ENCODE measurements at regions of chr6 and their contacts with region 1.

Region 1: GRCh38 chr6:125906158-125906998 is 50.2 kb upstream of the HINT3 start:
- DNase-seq: no peak
- ATAC-seq: peak; percentile 55
- H3K4me3 ChIP-seq: no peak overlapping the region
- H3K27ac ChIP-seq: no peak overlapping the region
- H3K4me1 ChIP-seq: peaks cover 16% of the 10 kb centered on the region
- H3K27me3 ChIP-seq: no peaks in the 10 kb centered on the region
- CTCF ChIP-seq: peak; percentile 63 to 94 (median 91)
- EP300 ChIP-seq: no peak
- POLR2A ChIP-seq: no peak
- RAD21 ChIP-seq: peak; percentile 58

Region 2: GRCh38 chr6:125888989-125889656 is 17.3 kb before region 1 on chr6:
- CTCF ChIA-PET with region 1: interaction called, 30 read pairs
- POLR2A ChIA-PET with region 1: interaction called, 4 read pairs
- RAD21 ChIA-PET with region 1: no interaction called
- SMC1A ChIA-PET with region 1: interaction called, 4 read pairs
- in situ Hi-C with region 1: no loop called
- intact Hi-C with region 1: no loop called
- DNase-seq: no peak
- ATAC-seq: peak; percentile 66
- H3K4me3 ChIP-seq: no peak overlapping the region
- H3K27ac ChIP-seq: no peak overlapping the region
- H3K4me1 ChIP-seq: no peaks in the 10 kb centered on the region
- H3K27me3 ChIP-seq: no peaks in the 10 kb centered on the region
- CTCF ChIP-seq: peak; percentile 46 to 52 (median 50)
- EP300 ChIP-seq: no peak
- POLR2A ChIP-seq: no peak
- RAD21 ChIP-seq: peak; percentile 51

Region 3: DNA sequence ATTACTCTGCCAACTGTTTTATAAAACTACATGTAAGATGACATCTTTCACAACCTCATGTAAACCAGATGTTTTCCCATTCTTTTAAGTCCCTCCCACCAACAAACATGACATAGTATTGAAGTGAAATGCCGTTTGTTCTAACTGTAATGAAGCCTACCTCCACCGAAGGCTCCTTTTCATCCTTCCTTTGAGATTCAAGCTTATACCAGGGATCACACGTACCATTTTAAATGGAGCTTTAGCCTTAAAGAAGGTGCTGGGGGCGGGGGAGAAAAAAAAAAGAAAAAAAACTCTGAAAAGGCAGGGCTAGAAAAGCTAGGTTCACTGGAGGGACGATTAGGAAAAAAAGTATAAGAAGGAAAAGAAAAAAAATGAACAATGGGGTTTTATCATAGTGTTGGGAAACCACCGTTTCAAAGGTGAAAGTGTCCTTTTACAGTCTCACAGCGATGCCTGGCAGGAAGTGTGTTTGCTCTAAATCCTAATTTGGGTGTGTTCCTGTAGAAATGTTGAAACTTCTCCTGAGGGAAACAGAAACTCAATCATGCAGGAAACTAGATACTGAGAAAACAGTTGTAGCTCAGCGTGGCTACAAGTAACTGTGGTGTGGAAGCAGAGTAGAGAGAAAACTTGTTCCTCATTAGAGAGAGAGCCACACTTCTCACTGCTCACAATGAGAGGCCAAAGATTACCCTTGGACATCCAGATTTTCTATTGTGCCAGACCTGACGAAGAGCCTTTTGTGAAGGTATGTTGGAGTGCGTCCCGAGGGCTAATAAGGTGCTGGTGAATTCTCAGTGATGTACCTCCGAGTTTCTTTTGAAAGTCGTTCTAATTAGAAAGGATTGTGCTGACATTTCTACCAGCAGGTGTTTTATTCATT is 12.5 kb after region 1 on chr6:
- CTCF ChIA-PET with region 1: interaction called, 153 read pairs
- POLR2A ChIA-PET with region 1: interaction called, 10 read pairs
- RAD21 ChIA-PET with region 1: interaction called, 12 read pairs
- SMC1A ChIA-PET with region 1: interaction called, 31 read pairs
- in situ Hi-C with region 1: no loop called
- intact Hi-C with region 1: loop called (anchors 1 kb)
- DNase-seq: peak; percentile 93
- ATAC-seq: peak; percentile 94
- H3K4me3 ChIP-seq: peak overlapping the region; percentile 62
- H3K27ac ChIP-seq: peak overlapping the region; percentile 96
- H3K4me1 ChIP-seq: peaks cover 8% of the 10 kb centered on the region
- H3K27me3 ChIP-seq: no peaks in the 10 kb centered on the region
- CTCF ChIP-seq: no peak
- EP300 ChIP-seq: 0 out of 4 replicates have a peak, but pooled peaks have one; percentile 11 to 25
- POLR2A ChIP-seq: peak; percentile 72
- RAD21 ChIP-seq: no peak

Region 4: DNA sequence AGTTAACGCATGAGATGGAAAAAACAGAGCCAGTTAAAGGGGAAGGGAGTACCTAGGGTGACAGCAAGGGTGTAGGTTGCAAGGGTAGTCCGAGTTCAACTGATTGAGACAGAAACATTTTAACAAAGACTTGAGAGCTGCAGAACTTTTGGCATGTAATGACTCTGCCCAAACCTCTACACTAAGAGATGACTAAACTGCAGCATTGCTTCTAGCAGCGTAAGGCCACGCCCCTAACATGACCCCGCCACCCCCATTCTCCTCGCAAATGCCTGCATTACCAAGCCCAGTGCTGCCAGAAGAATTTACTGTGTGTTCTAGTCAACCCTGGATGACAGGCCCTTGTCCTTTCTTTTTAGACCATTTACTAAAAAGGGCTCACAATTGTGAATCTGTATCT is 43.9 kb after region 1 on chr6:
- CTCF ChIA-PET with region 1: interaction called, 46 read pairs
- POLR2A ChIA-PET with region 1: interaction called, 4 read pairs
- RAD21 ChIA-PET with region 1: interaction called, 27 read pairs
- SMC1A ChIA-PET with region 1: interaction called, 7 read pairs
- in situ Hi-C with region 1: no loop called
- intact Hi-C with region 1: no loop called
- DNase-seq: no peak
- ATAC-seq: no peak
- H3K4me3 ChIP-seq: no peak overlapping the region
- H3K27ac ChIP-seq: no peak overlapping the region
- H3K4me1 ChIP-seq: no peaks in the 10 kb centered on the region
- H3K27me3 ChIP-seq: no peaks in the 10 kb centered on the region
- CTCF ChIP-seq: no peak
- EP300 ChIP-seq: no peak
- POLR2A ChIP-seq: no peak
- RAD21 ChIP-seq: no peak

Measured in GM12878 (cell line).